Motor neuron (in vitro differentiated cells): ENCODE measurements at regions of chr22 and their contacts with region 1.

Region 1: DNA sequence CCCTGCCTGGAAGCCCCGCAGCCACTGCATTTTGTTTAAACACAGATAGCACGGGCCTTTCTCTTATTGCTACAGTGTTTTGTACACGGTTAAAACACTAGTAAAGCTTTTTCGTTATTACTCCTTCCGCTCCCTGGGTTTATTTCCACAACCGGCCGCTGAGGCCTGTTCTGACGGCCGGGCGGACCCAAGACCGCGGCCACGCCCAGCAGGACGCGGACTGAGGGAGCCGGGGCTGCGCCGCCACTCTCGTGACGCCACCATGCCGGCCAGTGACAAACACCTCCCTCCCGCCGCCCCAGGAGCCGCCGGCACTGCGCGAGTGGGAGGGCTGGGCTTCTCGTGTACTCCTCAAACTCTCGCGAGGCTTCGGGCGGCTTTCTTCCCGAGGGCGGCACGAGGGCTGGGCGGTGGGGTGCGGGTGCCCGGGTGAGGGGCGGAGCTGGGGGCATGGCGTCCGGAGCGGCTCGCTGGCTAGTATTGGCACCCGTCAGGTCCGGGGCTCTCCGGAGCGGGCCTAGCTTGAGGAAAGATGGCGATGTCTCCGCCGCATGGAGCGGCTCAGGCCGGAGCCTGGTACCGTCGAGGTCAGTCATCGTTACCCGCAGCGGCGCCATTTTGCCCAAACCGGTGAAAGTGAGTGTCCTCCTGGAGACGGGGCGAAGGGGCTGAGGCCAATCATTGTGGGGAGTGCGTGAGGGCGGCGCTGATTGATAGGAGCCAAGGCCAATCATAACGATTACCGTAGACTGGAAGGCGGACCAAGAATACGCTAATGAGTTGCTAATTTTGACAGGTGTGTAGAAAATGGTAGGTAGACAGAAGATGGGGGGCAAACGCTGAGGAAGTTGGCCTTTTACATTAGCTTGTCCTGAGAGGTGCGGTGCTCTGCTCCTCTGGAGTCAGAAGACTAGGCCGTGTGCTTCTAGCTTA is at the start of gene SMDT1:
- ATAC-seq: peak; percentile 87 to 93 (median 90)
- H3K4me3 ChIP-seq: peak within 1 kb of the TSS; percentile 57 to 81 (median 64)
- H3K27ac ChIP-seq: peak within 1 kb of the TSS; percentile 97
- H3K4me1 ChIP-seq: peaks cover 16 to 20% of the 10 kb centered on the region in 2 donors
- total RNA-seq, gene SMDT1: 6.9 to 28.5 (median 20.8) TPM

Region 2: DNA sequence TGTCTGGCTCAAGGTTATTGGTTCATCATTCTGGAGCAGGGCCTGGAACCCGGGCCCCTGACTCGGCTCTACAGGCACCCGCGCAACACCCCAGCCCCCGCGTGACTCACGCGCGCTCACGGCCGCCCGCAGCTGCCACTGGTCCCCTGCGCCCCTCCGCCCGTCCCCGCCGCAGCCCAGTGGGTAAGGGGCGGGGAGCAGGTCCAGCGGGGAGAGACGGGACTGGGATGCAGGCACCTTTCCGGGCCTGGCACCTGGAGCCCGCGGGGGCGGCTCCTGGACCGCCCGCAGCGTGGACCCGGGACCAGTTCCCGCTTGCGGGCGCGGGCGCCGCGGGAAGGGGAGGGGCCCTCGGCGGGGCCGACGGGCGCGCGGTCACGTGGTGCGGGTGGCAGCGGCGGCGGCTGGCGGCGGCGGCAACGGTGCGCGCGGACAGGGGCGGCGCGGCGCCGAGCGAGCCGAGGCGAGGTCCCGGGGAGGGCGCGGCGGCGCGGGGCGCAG is 103.1 kb before region 1 on chr22:
- in situ Hi-C with region 1: loop called in 1 of 9 experiments (anchors 10 kb)
- ATAC-seq: peak; percentile 39 to 85 (median 76)
- H3K4me3 ChIP-seq: peak overlapping the region; percentile 49 to 88 (median 58)
- H3K27ac ChIP-seq: peak overlapping the region; percentile 74
- H3K4me1 ChIP-seq: peaks cover 14 to 16% of the 10 kb centered on the region in 2 donors